CD8-positive, alpha-beta T cell (primary cell): ENCODE measurements at regions of chr2 and their contacts with region 1.

Region 1: DNA sequence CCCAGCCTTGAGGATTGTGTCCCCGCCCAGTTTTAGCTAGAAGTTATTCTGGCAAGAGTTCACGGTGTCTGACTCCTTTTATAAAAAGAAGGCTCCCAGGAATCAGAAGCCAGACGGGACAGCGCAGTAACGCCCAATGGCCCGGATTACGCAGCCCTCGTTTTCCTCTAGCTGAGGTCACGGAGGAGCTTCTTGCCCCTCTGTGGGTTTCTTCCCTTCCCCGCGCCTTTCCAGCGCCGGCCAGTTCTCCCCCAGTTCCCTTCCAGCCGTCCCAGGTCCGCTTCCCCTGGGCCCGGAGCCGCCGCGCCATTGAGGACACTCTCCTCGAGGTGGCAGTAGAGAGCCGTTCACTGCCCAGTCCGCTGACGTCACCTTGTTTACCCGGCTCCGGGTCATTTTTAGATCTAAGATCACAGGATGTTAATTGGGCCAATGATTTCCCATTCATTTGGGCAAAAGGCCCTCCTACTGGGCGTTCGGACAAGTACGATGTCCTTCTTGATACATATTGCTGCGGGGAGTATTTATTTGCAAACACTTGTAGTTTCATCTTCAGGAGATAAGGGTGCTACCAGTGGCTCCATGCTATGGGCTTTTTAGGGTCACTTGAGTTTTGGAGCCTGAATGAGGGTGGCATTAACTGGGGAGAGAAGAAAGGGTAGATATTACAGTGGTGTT is 81.5 kb upstream of the PPM1B start:
- DNase-seq: peak; percentile 68 to 91 (median 84)
- ATAC-seq: peak; percentile 98
- H3K4me3 ChIP-seq: peak overlapping the region; percentile 53 to 56
- H3K4me3 Mint-ChIP-seq: peak overlapping the region; percentile 87
- H3K27ac ChIP-seq: peak overlapping the region; percentile 58 to 64
- H3K27ac Mint-ChIP-seq: peak overlapping the region; percentile 94
- H3K4me1 ChIP-seq: peaks cover 9% of the 10 kb centered on the region
- H3K4me1 Mint-ChIP-seq: peaks cover 16% of the 10 kb centered on the region
- H3K27me3 ChIP-seq: no peaks in the 10 kb centered on the region
- H3K27me3 Mint-ChIP-seq: no peaks in the 10 kb centered on the region
- CTCF ChIP-seq: peak; percentile 90

Region 2: GRCh38 chr2:44071454-44072046 is 15.6 kb before region 1 on chr2:
- CTCF ChIA-PET with region 1: interaction called, 13 read pairs
- POLR2A ChIA-PET with region 1: interaction called, 3 read pairs
- intact Hi-C with region 1: no loop called
- DNase-seq: no peak
- ATAC-seq: no peak
- H3K4me3 ChIP-seq: no peak overlapping the region
- H3K4me3 Mint-ChIP-seq: no peak overlapping the region
- H3K27ac ChIP-seq: no peak overlapping the region
- H3K27ac Mint-ChIP-seq: no peak overlapping the region
- H3K4me1 ChIP-seq: no peaks in the 10 kb centered on the region
- H3K4me1 Mint-ChIP-seq: no peaks in the 10 kb centered on the region
- H3K27me3 ChIP-seq: no peaks in the 10 kb centered on the region
- H3K27me3 Mint-ChIP-seq: peaks cover 9% of the 10 kb centered on the region
- CTCF ChIP-seq: no peak

Region 3: GRCh38 chr2:44244129-44244871 is 157.1 kb after region 1 on chr2:
- CTCF ChIA-PET with region 1: interaction called, 9 read pairs
- POLR2A ChIA-PET with region 1: no interaction called
- intact Hi-C with region 1: loop called (anchors 1 to 2 kb)
- DNase-seq: peak; percentile 13 to 86 (median 54)
- ATAC-seq: peak; percentile 92
- H3K4me3 ChIP-seq: peak overlapping the region; percentile 12 to 57
- H3K4me3 Mint-ChIP-seq: peak overlapping the region; percentile 88
- H3K27ac ChIP-seq: peak overlapping the region in 1 of 2 experiments; percentile 26
- H3K27ac Mint-ChIP-seq: peak overlapping the region; percentile 69
- H3K4me1 ChIP-seq: peaks cover 12% of the 10 kb centered on the region
- H3K4me1 Mint-ChIP-seq: peaks cover 33% of the 10 kb centered on the region
- H3K27me3 ChIP-seq: no peaks in the 10 kb centered on the region
- H3K27me3 Mint-ChIP-seq: no peaks in the 10 kb centered on the region
- CTCF ChIP-seq: peak; percentile 86

Region 4: DNA sequence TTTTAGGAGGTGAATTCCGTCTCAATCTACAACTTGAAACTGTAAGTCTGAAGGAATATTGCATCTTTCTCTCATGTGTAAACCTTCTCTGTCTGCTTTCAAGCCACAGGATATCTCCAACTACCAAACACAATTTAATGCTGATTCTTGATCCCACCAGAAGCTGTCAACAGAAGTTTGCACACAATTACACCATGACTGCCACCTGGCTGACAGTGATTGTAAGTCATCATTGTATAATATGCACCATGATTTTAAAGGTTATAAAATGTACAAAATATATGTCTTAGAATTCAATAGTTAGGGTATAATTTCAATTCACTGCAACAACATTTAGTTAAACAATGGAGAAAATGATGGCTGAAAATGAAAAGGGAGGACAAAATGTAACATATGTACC is 255.7 kb after region 1 on chr2:
- CTCF ChIA-PET with region 1: interaction called, 15 read pairs
- POLR2A ChIA-PET with region 1: no interaction called
- intact Hi-C with region 1: loop called (anchors 1 kb)
- DNase-seq: peak in 4 of 9 experiments; percentile 25 to 62 (median 48)
- ATAC-seq: peak; percentile 62
- H3K4me3 ChIP-seq: no peak overlapping the region
- H3K4me3 Mint-ChIP-seq: no peak overlapping the region
- H3K27ac ChIP-seq: no peak overlapping the region
- H3K27ac Mint-ChIP-seq: no peak overlapping the region
- H3K4me1 ChIP-seq: no peaks in the 10 kb centered on the region
- H3K4me1 Mint-ChIP-seq: peaks cover 2% of the 10 kb centered on the region
- H3K27me3 ChIP-seq: no peaks in the 10 kb centered on the region
- H3K27me3 Mint-ChIP-seq: no peaks in the 10 kb centered on the region
- CTCF ChIP-seq: peak; percentile 61

Region 5: DNA sequence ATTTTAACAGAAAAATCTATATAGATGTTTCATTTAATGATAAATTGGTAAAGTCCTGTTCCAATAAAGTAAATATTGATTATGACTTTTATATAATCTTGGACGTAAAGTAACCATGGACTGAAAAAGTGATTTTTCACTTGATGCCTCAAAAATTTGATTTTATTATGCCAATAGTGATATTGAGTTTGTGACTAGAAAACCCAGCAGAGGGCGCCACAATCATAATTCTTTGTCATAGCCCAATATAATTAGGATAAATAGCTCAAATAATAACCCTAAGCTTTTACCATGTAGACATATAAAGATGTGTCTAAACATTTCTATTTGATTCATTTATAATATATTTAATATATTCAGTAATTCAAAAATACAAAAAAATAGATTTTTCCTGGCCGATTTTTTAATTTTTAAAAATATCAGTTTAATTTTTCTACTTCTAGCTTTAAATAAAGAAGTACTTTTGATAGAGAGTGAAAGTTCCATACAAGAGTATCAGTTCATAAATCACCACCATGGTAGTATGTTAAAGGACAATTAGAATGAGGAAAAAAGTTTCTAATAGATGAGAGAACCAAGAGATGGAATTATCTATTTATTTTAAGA is 305.3 kb after region 1 on chr2:
- CTCF ChIA-PET with region 1: interaction called, 3 read pairs
- POLR2A ChIA-PET with region 1: no interaction called
- intact Hi-C with region 1: loop called in 1 of 2 experiments (anchors 2 kb)
- DNase-seq: peak in 8 of 9 experiments; percentile 11 to 60 (median 52)
- ATAC-seq: no peak
- H3K4me3 ChIP-seq: no peak overlapping the region
- H3K4me3 Mint-ChIP-seq: no peak overlapping the region
- H3K27ac ChIP-seq: no peak overlapping the region
- H3K27ac Mint-ChIP-seq: no peak overlapping the region
- H3K4me1 ChIP-seq: no peaks in the 10 kb centered on the region
- H3K4me1 Mint-ChIP-seq: peaks cover 6% of the 10 kb centered on the region
- H3K27me3 ChIP-seq: no peaks in the 10 kb centered on the region
- H3K27me3 Mint-ChIP-seq: no peaks in the 10 kb centered on the region
- CTCF ChIP-seq: peak; percentile 77

Region 6: DNA sequence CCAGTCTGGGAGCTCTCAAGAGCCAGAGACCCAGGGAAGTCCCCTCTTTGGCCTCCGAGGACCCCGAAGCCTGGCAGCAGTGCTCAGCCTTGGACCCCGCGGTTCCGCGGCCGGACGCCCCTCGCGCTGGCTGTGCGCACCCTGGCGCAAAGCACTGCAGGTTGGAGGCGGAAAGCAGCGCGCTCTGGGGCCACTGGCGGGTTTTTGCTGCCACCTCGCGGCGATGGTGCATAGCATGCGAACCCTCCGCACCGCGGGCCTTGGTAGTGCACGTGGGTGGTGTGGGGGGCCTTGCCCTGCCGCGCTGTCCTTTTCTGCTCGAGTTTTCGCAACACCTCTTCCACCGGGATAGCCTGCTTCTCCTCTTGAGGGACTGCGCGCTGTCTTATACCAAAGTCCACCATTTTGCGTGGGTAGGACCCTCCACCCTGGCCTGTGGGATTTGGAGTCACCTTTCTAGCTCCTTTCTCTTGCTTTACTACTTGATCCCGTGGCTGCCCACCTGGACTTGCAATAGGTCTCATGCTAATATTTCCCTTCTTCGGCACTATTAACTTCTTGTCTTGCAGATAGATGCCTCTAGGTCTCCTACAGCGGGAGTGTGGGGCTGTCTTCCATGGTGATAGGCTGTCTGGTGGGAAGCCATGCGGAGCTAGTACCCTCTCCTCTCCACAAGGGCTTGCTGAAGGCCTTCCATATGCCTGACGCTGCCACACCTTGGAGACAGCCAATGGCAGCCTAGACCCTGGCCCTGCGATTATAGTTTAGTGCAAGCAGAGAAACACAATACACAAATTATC is 868.6 kb after region 1 on chr2:
- CTCF ChIA-PET with region 1: interaction called, 8 read pairs
- POLR2A ChIA-PET with region 1: no interaction called
- intact Hi-C with region 1: loop called in 1 of 2 experiments (anchors 1 kb)
- DNase-seq: peak; percentile 55 to 83 (median 66)
- ATAC-seq: peak; percentile 86
- H3K4me3 ChIP-seq: peak overlapping the region in 1 of 2 experiments; percentile 27
- H3K4me3 Mint-ChIP-seq: peak overlapping the region; percentile 22
- H3K27ac ChIP-seq: no peak overlapping the region
- H3K27ac Mint-ChIP-seq: no peak overlapping the region
- H3K4me1 ChIP-seq: peaks cover 18% of the 10 kb centered on the region
- H3K4me1 Mint-ChIP-seq: peaks cover 25% of the 10 kb centered on the region
- H3K27me3 ChIP-seq: peaks cover 13% of the 10 kb centered on the region in 2 experiments
- H3K27me3 Mint-ChIP-seq: peaks cover 58% of the 10 kb centered on the region
- CTCF ChIP-seq: peak; percentile 69